GM18951 (cell line): ENCODE measurements at regions of chr7 and their contacts with region 1.

Region 1: GRCh38 chr7:974820-975681 is at the start of gene COX19:
- POLR2A ChIP-seq: peak; percentile 85

Region 2: DNA sequence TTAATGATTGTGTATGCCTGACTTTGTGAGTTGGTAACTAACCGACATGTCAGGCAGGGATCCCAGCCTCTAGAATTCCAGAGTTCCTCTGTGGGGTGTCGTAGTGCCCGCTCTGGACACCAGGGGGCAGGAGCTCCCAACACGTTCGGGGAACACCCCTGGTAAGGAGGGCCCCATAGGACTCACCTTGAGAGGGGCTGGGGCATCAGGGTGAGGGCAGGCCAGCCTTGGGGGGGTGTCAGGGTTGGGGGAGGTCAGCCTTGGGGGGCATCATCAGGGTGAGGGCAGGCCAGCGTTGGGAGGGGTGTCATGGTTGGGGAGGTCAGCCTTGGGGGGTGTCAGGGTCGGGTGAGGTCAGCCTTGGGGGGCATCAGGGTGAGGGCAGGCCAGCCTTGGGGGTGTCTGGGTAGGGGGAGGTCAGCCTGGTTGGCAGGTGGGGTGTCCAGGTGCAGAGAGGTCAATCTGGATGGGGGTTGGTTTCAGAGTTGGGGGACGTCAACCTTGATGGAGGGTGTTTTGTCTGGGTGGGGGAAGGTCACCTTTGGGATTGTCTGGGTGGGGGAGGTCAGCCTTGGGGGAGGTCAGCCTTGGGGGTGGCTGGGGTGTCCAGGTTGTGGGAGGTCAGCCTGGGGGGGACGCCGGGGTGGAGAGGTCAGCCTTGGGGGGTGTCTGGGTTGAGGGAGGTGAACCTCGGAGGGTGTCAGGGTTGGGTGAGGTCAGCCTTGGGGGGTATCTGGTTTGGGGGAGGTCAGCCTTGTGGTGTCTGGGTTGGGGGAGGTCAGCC is 188.4 kb before region 1 on chr7:
- in situ Hi-C with region 1: loop called (anchors 25 kb)
- POLR2A ChIP-seq: no peak